PC-9 (cell line): ENCODE measurements at regions of chr14 and their contacts with region 1.

Region 1: GRCh38 chr14:102586414-102587104 is 5.9 kb upstream of the RCOR1 start:
- DNase-seq: no peak
- H3K4me3 ChIP-seq: no peak overlapping the region
- H3K27ac ChIP-seq: no peak overlapping the region
- H3K4me1 ChIP-seq: peaks cover 26% of the 10 kb centered on the region
- H3K27me3 ChIP-seq: no peaks in the 10 kb centered on the region
- CTCF ChIP-seq: no peak

Region 2: DNA sequence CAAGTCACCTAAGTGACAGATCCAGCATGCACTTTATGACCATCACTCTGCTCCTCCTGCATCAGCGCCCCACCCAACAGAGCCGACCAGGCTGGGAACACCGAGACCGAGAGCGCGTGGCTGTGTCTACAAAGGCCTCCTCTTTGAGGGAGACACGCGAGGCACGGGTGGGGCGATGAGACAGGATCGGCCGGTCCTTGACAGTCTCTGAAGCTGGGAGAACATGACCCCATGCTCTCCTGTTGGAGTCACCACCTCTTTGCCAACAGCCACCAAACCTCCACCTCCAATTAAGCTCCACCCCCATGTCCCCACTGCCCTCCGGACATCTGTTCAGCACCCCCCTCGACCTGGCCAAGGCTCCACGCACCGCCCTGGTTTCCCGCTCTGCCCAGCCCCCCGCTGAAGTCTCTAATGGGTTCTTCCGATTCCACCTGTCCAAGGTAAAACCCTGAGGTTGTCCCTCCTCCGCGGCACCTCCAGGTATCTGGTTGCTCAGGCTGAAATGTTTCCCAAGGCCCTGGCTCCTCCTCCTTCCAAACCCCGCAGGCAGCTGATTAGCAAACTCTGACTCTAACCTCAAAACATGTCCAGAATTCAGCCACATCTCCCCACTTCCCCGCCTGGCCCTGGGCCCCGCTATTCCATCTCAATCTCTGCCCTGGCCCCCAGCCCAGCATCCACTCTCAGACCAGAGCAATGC is 531.2 kb before region 1 on chr14:
- CTCF ChIA-PET with region 1: no interaction called
- POLR2A ChIA-PET with region 1: no interaction called
- intact Hi-C with region 1: no loop called
- DNase-seq: peak; percentile 92 to 98
- H3K4me3 ChIP-seq: peak overlapping the region; percentile 43
- H3K27ac ChIP-seq: peak overlapping the region; percentile 48
- H3K4me1 ChIP-seq: peaks cover 36% of the 10 kb centered on the region
- H3K27me3 ChIP-seq: no peaks in the 10 kb centered on the region
- CTCF ChIP-seq: no peak

Region 3: GRCh38 chr14:102560458-102561154 is 26.0 kb before region 1 on chr14:
- CTCF ChIA-PET with region 1: no interaction called
- POLR2A ChIA-PET with region 1: interaction called, 15 read pairs
- intact Hi-C with region 1: no loop called
- DNase-seq: no peak
- H3K4me3 ChIP-seq: no peak overlapping the region
- H3K27ac ChIP-seq: no peak overlapping the region
- H3K4me1 ChIP-seq: no peaks in the 10 kb centered on the region
- H3K27me3 ChIP-seq: no peaks in the 10 kb centered on the region
- CTCF ChIP-seq: no peak

Region 4: GRCh38 chr14:102602379-102603292 is 16.1 kb after region 1 on chr14:
- CTCF ChIA-PET with region 1: no interaction called
- POLR2A ChIA-PET with region 1: no interaction called
- intact Hi-C with region 1: no loop called
- DNase-seq: no peak
- H3K4me3 ChIP-seq: no peak overlapping the region
- H3K27ac ChIP-seq: peak overlapping the region; percentile 33; the same call in 1 of the 2 replicates
- H3K4me1 ChIP-seq: peaks cover 29% of the 10 kb centered on the region
- H3K27me3 ChIP-seq: no peaks in the 10 kb centered on the region
- CTCF ChIP-seq: no peak

Region 5: DNA sequence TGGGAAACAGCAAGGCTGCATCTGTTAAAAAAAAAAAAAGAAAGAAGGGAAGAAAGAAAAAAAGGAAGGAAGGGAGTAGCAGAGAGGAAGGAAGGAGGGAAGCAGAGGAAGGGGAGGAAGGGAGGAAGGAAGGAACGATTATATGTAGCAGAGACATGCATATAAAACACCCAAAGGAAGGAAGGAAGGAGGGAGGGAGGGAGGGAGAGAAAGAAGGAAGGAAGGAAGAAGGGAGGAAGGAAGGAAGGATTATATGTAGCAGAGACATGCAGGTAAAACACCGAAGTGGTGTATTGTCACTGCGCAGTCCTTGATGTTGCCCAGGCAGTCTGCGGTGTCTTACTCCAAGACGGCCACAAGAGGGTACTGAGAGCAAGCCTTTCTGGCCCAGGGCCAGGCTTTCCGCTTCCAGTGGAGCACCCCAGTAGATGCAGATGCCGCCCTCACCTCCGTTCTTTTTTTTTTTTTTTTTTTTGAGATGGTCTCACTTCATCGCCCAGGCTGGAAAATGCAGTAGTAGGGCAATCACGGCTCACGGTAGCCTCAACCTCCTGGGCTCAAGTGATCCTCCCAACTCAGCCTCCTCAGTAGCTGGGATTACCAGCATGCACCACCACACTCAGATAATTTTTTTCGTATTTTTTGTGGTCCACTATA is 491.7 kb after region 1 on chr14:
- CTCF ChIA-PET with region 1: no interaction called
- POLR2A ChIA-PET with region 1: no interaction called
- intact Hi-C with region 1: no loop called
- DNase-seq: peak; percentile 88 to 93
- H3K4me3 ChIP-seq: no peak overlapping the region
- H3K27ac ChIP-seq: no peak overlapping the region
- H3K4me1 ChIP-seq: peaks cover 28% of the 10 kb centered on the region
- H3K27me3 ChIP-seq: no peaks in the 10 kb centered on the region
- CTCF ChIP-seq: peak; percentile 96